ENCODE measurements at regions of chr3 and their contacts with region 1.

Region 1: GRCh38 chr3:159884661-159885402 is 103.8 kb upstream of the IL12A start:
- DNase-seq: no peak
- H3K4me3 ChIP-seq: no peak overlapping the region
- CTCF ChIP-seq: peak; percentile 31

Region 2: GRCh38 chr3:159604151-159604581 is 280.7 kb before region 1 on chr3:
- CTCF ChIA-PET with region 1: no interaction called
- POLR2A ChIA-PET with region 1: no interaction called
- DNase-seq: no peak
- H3K4me3 ChIP-seq: no peak overlapping the region
- CTCF ChIP-seq: no peak

Region 3: GRCh38 chr3:159839561-159840379 is 45.1 kb before region 1 on chr3:
- CTCF ChIA-PET with region 1: interaction called, 17 read pairs
- POLR2A ChIA-PET with region 1: no interaction called
- DNase-seq: no peak
- H3K4me3 ChIP-seq: no peak within 1 kb of the TSS
- CTCF ChIP-seq: no peak

Region 4: GRCh38 chr3:159872374-159873109 is 12.3 kb before region 1 on chr3:
- CTCF ChIA-PET with region 1: interaction called, 110 read pairs
- POLR2A ChIA-PET with region 1: interaction called, 3 read pairs
- DNase-seq: peak; percentile 66
- H3K4me3 ChIP-seq: no peak overlapping the region
- CTCF ChIP-seq: peak; percentile 19

Region 5: GRCh38 chr3:159929435-159930141 is 44.8 kb after region 1 on chr3:
- CTCF ChIA-PET with region 1: interaction called, 31 read pairs
- POLR2A ChIA-PET with region 1: interaction called, 6 read pairs
- DNase-seq: peak; percentile 59
- H3K4me3 ChIP-seq: no peak overlapping the region
- CTCF ChIP-seq: peak; percentile 59

Region 6: DNA sequence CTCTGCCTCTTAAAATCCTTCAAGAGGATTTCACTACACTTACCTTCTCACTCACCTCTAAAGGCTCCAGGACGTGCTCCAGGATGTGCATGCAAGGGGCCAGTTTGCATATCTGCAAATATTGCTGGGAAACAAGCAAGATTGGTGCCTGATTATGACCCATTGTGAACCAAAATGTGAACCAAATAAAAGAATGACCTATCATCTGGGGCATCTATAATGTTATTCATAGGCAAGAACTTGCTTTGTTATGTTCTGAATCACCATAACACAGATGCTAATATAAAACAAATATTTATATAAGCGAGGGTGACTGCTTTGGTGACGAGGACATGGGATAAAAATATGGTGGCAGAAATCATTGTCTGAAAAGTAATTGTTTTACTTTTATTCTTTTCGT is 109.3 kb after region 1 on chr3:
- CTCF ChIA-PET with region 1: interaction called, 683 read pairs
- POLR2A ChIA-PET with region 1: interaction called, 5 read pairs
- DNase-seq: no peak
- H3K4me3 ChIP-seq: no peak overlapping the region
- CTCF ChIP-seq: no peak

Region 7: GRCh38 chr3:160163229-160163878 is 278.5 kb after region 1 on chr3:
- CTCF ChIA-PET with region 1: interaction called, 14 read pairs
- POLR2A ChIA-PET with region 1: no interaction called
- DNase-seq: no peak
- H3K4me3 ChIP-seq: no peak overlapping the region
- CTCF ChIP-seq: peak; percentile 14

Measured in AG04449 (cell line).